Aorta (tissue), 5 donors: ENCODE measurements at regions of chr7 and their contacts with region 1.

Region 1: DNA sequence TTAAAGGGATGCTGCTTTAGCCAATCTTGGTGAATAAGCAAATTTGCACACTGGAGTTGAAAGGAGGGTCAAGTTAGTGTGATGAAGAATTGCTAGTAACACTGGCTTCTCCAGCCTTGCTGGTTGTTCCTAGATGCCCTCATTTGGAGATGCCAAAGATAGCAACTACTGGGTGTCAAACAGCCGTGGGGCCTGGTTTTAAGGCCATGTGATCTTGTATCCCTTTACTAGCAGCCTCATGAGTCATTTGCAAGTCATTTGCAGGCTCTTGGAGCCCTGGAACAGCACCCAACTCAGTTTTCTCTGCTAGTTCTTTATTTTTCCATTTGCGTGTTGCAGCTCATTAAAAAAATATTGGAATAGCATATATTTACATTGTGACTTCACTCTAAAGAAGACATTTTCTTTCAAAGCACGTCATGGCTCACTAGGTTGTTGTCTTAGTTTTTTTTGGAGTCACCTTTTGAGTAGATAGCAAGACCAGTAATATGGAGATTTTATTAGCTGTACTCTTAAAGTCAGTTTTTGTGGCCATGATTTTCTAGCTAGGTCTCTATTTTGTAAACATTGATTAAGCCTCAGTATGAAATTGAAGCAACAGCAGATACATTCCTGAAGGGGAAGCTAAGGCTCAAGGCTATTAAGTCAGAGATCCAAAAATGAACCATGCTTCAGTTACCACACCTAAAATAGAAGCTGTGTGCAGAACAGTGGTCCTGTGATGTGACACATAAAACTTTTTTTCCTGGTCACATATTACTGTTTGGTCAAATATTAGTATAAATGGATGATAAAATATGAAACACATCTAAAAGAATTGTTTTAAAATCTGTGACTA is 1.3 kb downstream of the LSMEM1 start:
- DNase-seq: peak in 1 of 2 donors; percentile 84
- ATAC-seq: peak; percentile 92
- H3K4me3 ChIP-seq: no peak overlapping the region
- H3K27ac ChIP-seq: peak overlapping the region in 1 of 2 donors; percentile 74
- H3K4me1 ChIP-seq: peaks cover 3 to 9% of the 10 kb centered on the region in 2 donors
- H3K27me3 ChIP-seq: no peaks in the 10 kb centered on the region

Region 2: GRCh38 chr7:112398534-112398933 is 83.5 kb before region 1 on chr7:
- intact Hi-C with region 1: no loop called
- DNase-seq: no peak
- ATAC-seq: no peak
- H3K4me3 ChIP-seq: no peak overlapping the region
- H3K27ac ChIP-seq: no peak overlapping the region
- H3K4me1 ChIP-seq: no peaks in the 10 kb centered on the region
- H3K27me3 ChIP-seq: no peaks in the 10 kb centered on the region

Region 3: GRCh38 chr7:112449902-112450806 is 31.9 kb before region 1 on chr7 and contains the start of gene IFRD1:
- intact Hi-C with region 1: loop called (anchors 2 kb)
- DNase-seq: peak; percentile 99 to 100
- ATAC-seq: peak; percentile 96
- H3K4me3 ChIP-seq: peak within 1 kb of the TSS; percentile 67 to 98
- H3K27ac ChIP-seq: peak within 1 kb of the TSS; percentile 88 to 100
- H3K4me1 ChIP-seq: no peaks in the 10 kb centered on the region
- H3K27me3 ChIP-seq: no peaks in the 10 kb centered on the region
- total RNA-seq, gene IFRD1: 67.0 to 138 TPM